Activated T-helper 1 cell treated with anti-CD3 and anti-CD28 coated beads, Interleukin-12 subunit alpha, Interleukin-12 subunit beta, Interleukin-2, Interleukin-4 antibody, amounts not matched to agents 30 ng/mL and 10 ng/mL and 1 ng/mL, durations not matched to agents 14 hours and 24 hours and 36 hours (primary cell): ENCODE measurements at regions of chr3 and their contacts with region 1.

Region 1: GRCh38 chr3:10551821-10552630 is 46.6 kb upstream of the ATP2B2 start:
- DNase-seq: peak; percentile 61
- H3K4me3 Mint-ChIP-seq: peak overlapping the region; percentile 49
- H3K27ac Mint-ChIP-seq: peak overlapping the region; percentile 87
- H3K4me1 Mint-ChIP-seq: peaks cover 35% of the 10 kb centered on the region
- H3K27me3 Mint-ChIP-seq: peaks cover 6% of the 10 kb centered on the region

Region 2: GRCh38 chr3:9179826-9180763 is 1371.9 kb before region 1 on chr3:
- intact Hi-C with region 1: loop called (anchors 10 kb)
- DNase-seq: no peak
- H3K4me3 Mint-ChIP-seq: peak overlapping the region; percentile 73
- H3K27ac Mint-ChIP-seq: peak overlapping the region; percentile 74
- H3K4me1 Mint-ChIP-seq: peaks cover 46% of the 10 kb centered on the region
- H3K27me3 Mint-ChIP-seq: peaks cover 14% of the 10 kb centered on the region

Region 3: GRCh38 chr3:9582332-9582731 is 969.7 kb before region 1 on chr3:
- intact Hi-C with region 1: no loop called
- DNase-seq: no peak
- H3K4me3 Mint-ChIP-seq: no peak overlapping the region
- H3K27ac Mint-ChIP-seq: no peak overlapping the region
- H3K4me1 Mint-ChIP-seq: no peaks in the 10 kb centered on the region
- H3K27me3 Mint-ChIP-seq: no peaks in the 10 kb centered on the region

Region 4: GRCh38 chr3:10366651-10367101 is 185.3 kb before region 1 on chr3:
- intact Hi-C with region 1: loop called (anchors 2 kb)
- DNase-seq: peak; percentile 15
- H3K4me3 Mint-ChIP-seq: no peak overlapping the region
- H3K27ac Mint-ChIP-seq: peak overlapping the region; percentile 66
- H3K4me1 Mint-ChIP-seq: peaks cover 27% of the 10 kb centered on the region
- H3K27me3 Mint-ChIP-seq: peaks cover 5% of the 10 kb centered on the region

Region 5: GRCh38 chr3:10437272-10437994 is 114.6 kb before region 1 on chr3:
- intact Hi-C with region 1: loop called (anchors 1 kb)
- DNase-seq: peak; percentile 58
- H3K4me3 Mint-ChIP-seq: peak overlapping the region; percentile 32
- H3K27ac Mint-ChIP-seq: peak overlapping the region; percentile 82
- H3K4me1 Mint-ChIP-seq: peaks cover 29% of the 10 kb centered on the region
- H3K27me3 Mint-ChIP-seq: no peaks in the 10 kb centered on the region

Region 6: GRCh38 chr3:10602769-10603768 is 51.0 kb after region 1 on chr3:
- intact Hi-C with region 1: loop called (anchors 1 kb)
- DNase-seq: peak; percentile 47
- H3K4me3 Mint-ChIP-seq: peak overlapping the region; percentile 62
- H3K27ac Mint-ChIP-seq: no peak overlapping the region
- H3K4me1 Mint-ChIP-seq: peaks cover 25% of the 10 kb centered on the region
- H3K27me3 Mint-ChIP-seq: peaks cover 33% of the 10 kb centered on the region

Region 7: GRCh38 chr3:10835406-10835805 is 283.4 kb after region 1 on chr3:
- intact Hi-C with region 1: no loop called
- DNase-seq: no peak
- H3K4me3 Mint-ChIP-seq: no peak overlapping the region
- H3K27ac Mint-ChIP-seq: no peak overlapping the region
- H3K4me1 Mint-ChIP-seq: no peaks in the 10 kb centered on the region
- H3K27me3 Mint-ChIP-seq: peaks cover 2% of the 10 kb centered on the region